Heart right ventricle (tissue), 16 donors: ENCODE measurements at regions of chr7 and their contacts with region 1.

Region 1: DNA sequence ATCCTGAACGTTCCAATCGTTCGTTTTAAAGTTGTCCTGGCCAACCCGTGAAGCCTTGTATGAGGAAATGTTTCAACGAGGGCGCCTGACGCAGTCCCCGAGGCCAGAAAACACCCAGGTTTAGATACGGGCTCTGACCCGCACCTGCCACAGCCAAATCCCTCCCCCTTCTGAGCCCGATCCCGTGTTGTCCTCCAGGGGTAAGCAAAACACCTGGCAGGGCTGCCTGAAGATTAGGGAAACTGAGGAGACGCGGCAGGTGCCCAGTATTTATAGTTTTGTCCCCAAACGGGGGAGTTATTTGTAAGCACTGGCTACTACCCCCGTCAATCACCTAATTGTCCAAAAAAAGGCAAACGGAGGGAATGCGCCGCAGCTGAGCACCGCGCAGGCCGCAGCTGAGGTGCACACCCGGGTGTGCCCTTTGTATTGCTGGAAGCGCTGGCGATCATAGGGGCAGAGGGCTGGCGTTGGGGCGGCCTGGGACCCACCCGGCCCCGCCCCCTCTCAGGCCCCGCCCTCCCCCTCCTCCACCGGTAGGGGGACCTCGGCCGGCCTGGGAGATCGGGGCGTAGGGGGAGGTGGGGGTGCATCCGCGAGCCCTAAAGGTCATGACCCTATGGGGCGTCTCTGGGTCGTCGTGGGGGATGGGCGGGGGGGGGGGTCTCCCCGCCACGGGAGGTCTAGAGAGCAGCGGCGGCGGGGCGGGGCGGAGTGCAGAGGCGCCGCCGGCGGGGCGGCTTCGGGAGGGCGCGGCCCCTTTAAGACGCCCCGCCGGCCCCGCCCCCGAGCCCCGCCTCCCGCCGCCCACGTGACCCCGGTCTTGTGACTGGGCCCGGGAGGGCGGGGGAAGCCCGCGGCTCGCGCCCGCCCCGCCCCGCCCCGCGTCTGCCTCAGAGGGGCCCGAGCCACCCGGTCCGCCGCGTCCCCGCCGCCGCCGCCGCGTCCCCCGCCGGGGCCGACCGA is at the start of gene BRI3:
- DNase-seq: peak; percentile 91 to 95
- ATAC-seq: peak; percentile 70 to 89 (median 78)
- H3K4me3 ChIP-seq: peak within 1 kb of the TSS; percentile 82 to 99 (median 93)
- H3K27ac ChIP-seq: peak within 1 kb of the TSS; percentile 84 to 99 (median 97)
- H3K4me1 ChIP-seq: peaks cover 26 to 55% (median 46%) of the 10 kb centered on the region in 9 donors
- H3K27me3 ChIP-seq: no peaks in the 10 kb centered on the region
- CTCF ChIP-seq: peak in 6 of 9 donors; percentile 6 to 62 (median 52)
- total RNA-seq, gene BRI3: 174 to 267 (median 218) TPM

Region 2: DNA sequence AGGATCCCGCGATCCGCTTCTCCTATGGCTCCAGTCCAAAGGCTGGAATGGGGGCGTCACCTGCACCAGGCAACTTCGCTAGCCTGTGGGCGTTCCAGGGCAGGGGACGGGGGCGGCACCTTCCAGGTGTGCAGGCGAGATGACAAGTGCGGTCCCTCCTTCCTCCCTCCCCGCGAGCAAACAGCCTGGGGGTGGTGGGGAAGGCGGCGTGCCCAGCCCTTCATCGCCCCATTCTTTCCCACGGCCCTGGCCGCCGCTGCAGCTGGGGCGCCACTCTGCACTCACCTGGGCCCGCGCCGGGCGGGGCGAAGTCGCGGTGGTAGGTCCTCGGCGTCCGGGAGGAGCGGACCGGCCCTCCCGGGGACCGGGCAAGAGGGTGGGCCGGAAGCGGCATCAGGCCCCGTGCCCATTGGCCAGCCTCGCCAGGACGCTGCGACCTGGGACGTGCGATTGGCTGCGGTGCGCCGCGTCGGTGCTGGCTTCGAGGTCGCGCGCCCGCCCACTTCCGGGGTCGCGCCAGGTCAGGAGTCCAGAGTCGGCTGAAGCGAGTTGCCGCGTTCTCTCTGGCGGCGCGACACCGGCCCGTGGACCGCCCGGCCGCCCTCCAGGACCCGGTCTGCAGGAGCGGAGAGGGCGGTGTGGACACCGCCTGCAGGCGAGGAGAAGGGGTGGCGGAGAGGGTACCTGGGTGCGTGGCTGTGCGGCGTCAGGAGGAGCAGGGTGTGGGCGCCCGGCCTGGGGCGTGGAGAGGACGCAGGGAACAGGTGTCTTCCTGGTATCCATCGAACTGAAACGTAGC is 29.0 kb before region 1 on chr7 and contains the start of gene TECPR1:
- intact Hi-C with region 1: loop called in 4 of 10 experiments (anchors 2 to 5 kb)
- DNase-seq: peak; percentile 95 to 96
- ATAC-seq: peak; percentile 98 to 100 (median 99)
- H3K4me3 ChIP-seq: peak within 1 kb of the TSS; percentile 75 to 97 (median 90)
- H3K27ac ChIP-seq: peak within 1 kb of the TSS; percentile 72 to 93 (median 88)
- H3K4me1 ChIP-seq: peaks cover 4 to 66% (median 52%) of the 10 kb centered on the region in 9 donors
- H3K27me3 ChIP-seq: no peaks in the 10 kb centered on the region
- CTCF ChIP-seq: no peak
- total RNA-seq, gene TECPR1: 12.8 to 23.8 (median 15.4) TPM

Region 3: GRCh38 chr7:98323597-98324322 is 42.7 kb after region 1 on chr7:
- intact Hi-C with region 1: no loop called
- DNase-seq: no peak
- ATAC-seq: no peak
- H3K4me3 ChIP-seq: peak overlapping the region in 4 of 10 donors; percentile 1 to 18 (median 10)
- H3K27ac ChIP-seq: no peak overlapping the region
- H3K4me1 ChIP-seq: peaks cover 0 to 21% (median 5%) of the 10 kb centered on the region in 9 donors
- H3K27me3 ChIP-seq: peaks cover 0 to 16% (median 3%) of the 10 kb centered on the region in 7 donors
- CTCF ChIP-seq: no peak